K562 (cell line): ENCODE measurements at regions of chr17 and their contacts with region 1.

Region 1: DNA sequence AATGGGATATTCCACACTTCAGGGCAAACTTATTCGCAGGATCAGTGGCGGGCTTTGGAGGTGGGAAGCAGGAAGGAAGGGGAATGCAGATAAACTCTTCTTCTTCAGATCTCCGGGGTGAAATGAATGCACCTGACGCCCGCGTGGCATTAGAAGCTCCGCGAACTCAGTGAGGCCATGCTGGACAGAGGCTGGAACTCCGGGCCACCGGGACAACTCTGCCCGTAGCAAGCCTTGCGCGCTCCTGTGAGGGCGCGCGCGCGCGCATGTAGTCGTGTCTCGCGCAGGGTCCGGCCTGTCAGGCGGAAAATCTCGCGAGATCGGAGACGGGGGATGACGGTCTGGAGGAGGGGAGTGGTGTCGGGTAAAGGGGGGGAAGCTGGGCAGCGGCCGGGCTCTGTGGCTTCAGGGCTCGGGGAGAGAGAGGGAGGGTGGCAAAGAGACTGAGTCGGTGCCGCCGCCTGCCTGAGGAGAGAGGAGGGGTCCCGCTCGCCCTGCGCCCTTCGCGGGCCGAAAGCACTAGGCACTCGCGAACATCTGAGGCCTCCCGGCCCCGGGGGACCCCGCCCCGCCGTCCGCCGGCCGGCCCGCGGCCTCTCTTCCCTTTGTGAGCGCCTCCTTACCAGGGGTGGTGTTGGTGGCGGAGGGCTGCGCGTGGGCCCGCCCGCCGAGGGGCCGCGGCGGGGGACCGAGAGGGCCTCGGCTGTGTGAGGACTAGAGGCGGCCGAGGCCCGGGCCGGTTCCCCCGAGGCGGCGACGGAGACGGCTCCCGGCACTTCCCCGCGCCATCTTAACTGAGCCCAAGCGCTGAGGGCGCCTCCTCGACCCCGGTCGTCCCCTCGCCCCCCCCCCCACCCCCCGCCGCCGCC is at the start of gene TAOK1:
- DNase-seq: peak; percentile 96 to 99 (median 96)
- ATAC-seq: peak; percentile 91
- H3K4me3 ChIP-seq: peak within 1 kb of the TSS; percentile 95
- H3K27ac ChIP-seq: peak within 1 kb of the TSS; percentile 91
- H3K4me1 ChIP-seq: peaks cover 9 to 15% of the 10 kb centered on the region in 2 experiments; a peak in 4 of 5 replicates
- H3K27me3 ChIP-seq: no peaks in the 10 kb centered on the region
- CTCF ChIP-seq: peak in 1 of 3 experiments; percentile 38; a peak in 2 of 6 replicates
- EP300 ChIP-seq: 0 out of 2 replicates have a peak, but pooled peaks have one; percentile 5
- POLR2A ChIP-seq: peak; percentile 95
- RAD21 ChIP-seq: no peak
- polyA plus RNA-seq, gene TAOK1: 3.2 to 3.4 TPM

Region 2: DNA sequence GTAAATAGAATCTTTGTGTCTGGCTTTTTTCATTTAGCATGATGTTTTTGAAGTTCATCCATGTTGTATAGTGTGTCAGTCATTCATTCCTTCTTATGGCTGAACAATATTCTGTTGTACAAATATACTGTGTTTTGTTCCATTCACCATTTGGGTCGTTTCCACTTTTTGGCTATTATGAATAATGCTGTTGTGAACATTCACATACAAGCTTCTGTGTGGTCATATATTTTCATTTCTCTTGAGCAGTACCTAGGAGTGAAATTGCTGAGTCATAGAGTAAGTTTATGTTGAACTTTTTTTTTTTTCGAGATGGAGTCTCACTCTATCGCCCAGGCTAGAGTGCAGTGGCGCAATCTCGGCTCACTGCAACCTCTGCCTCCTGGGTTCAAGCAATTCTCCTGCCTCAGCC is 32.4 kb before region 1 on chr17:
- CTCF ChIA-PET with region 1: no interaction called
- POLR2A ChIA-PET with region 1: no interaction called
- in situ Hi-C with region 1: no loop called
- intact Hi-C with region 1: no loop called
- DNase-seq: peak in 1 of 4 experiments; percentile 14
- ATAC-seq: peak; percentile 79
- H3K4me3 ChIP-seq: no peak overlapping the region
- H3K27ac ChIP-seq: no peak overlapping the region
- H3K4me1 ChIP-seq: peaks cover 0 to 2% of the 10 kb centered on the region in 2 experiments; a peak in 1 of 5 replicates
- H3K27me3 ChIP-seq: no peaks in the 10 kb centered on the region; a peak in 1 of 5 replicates
- CTCF ChIP-seq: no peak
- EP300 ChIP-seq: 0 out of 2 replicates have a peak, but pooled peaks have one; percentile 12
- POLR2A ChIP-seq: no peak
- RAD21 ChIP-seq: no peak

Region 3: DNA sequence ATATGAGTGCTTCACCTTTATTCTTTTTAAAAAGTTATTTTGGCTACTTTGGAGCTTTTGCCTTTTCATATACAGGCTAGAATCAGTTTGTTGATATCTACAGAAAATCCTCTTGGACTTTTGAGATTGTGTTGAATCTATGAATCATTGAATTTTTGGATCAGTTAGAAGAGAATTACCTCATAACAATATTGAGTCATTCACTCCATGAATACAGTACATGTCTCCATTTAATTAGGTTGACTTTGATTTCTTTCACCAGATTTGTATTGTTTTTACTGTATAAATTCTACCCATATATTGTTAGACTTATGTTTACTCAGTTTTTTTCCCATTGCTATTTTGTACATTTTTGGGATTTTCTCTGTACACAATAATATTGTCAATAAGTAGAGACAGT is 54.4 kb after region 1 on chr17:
- CTCF ChIA-PET with region 1: no interaction called
- POLR2A ChIA-PET with region 1: no interaction called
- in situ Hi-C with region 1: no loop called
- intact Hi-C with region 1: no loop called
- DNase-seq: no peak
- ATAC-seq: no peak
- H3K4me3 ChIP-seq: no peak overlapping the region
- H3K27ac ChIP-seq: no peak overlapping the region
- H3K4me1 ChIP-seq: no peaks in the 10 kb centered on the region
- H3K27me3 ChIP-seq: no peaks in the 10 kb centered on the region
- CTCF ChIP-seq: no peak
- EP300 ChIP-seq: no peak
- POLR2A ChIP-seq: no peak
- RAD21 ChIP-seq: no peak

Region 4: DNA sequence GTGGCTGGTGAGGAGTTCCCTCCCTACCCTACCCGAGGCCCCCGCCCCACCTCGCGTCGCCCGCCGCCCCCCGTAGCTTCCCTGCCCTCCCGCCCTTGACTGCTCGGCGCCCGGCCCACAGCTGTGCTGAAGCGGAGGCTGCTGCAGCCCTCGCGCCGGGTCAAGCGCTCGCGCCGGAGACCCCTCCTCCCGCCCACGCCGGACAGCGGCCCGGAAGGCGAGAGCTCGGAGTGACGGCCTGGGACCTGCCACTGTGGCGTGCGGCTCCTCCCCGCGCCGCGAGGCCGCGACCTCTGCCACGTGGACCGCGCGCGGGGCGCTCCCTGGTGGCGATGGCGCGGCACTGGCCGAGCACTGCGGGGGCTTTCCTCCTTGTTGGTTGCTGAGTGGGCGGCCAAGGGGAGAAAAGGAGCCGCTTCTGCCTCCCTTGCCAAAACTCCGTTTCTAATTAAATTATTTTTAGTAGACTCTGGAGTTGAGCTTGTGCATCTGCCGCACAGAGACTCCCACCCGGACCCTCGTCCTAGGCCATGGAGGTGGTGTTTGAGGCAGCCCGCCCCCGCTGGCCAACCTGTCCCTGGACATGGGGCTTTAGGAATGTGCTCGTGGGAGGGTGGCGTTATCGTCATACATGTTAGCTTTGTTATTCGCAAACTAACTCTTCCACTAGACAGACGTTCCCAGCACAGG is 182.6 kb after region 1 on chr17:
- CTCF ChIA-PET with region 1: no interaction called
- POLR2A ChIA-PET with region 1: no interaction called
- in situ Hi-C with region 1: no loop called
- intact Hi-C with region 1: no loop called
- DNase-seq: peak; percentile 64 to 72 (median 70)
- ATAC-seq: peak; percentile 58
- H3K4me3 ChIP-seq: no peak overlapping the region
- H3K27ac ChIP-seq: no peak overlapping the region
- H3K4me1 ChIP-seq: peaks cover 3 to 65% of the 10 kb centered on the region in 2 experiments; a peak in 4 of 5 replicates
- H3K27me3 ChIP-seq: no peaks in the 10 kb centered on the region
- CTCF ChIP-seq: peak; percentile 58 to 73 (median 61)
- EP300 ChIP-seq: no peak
- POLR2A ChIP-seq: no peak
- RAD21 ChIP-seq: peak in 1 of 2 experiments; percentile 61; a peak in 2 of 4 replicates

Region 5: GRCh38 chr17:29589524-29590410 is 199.6 kb after region 1 on chr17 and contains the start of gene GIT1:
- CTCF ChIA-PET with region 1: no interaction called
- POLR2A ChIA-PET with region 1: interaction called, 3 read pairs
- in situ Hi-C with region 1: no loop called
- intact Hi-C with region 1: loop called (anchors 5 kb)
- DNase-seq: peak; percentile 89 to 96 (median 90)
- ATAC-seq: peak; percentile 80
- H3K4me3 ChIP-seq: peak within 1 kb of the TSS; percentile 56
- H3K27ac ChIP-seq: peak within 1 kb of the TSS; percentile 62
- H3K4me1 ChIP-seq: peaks cover 38 to 78% of the 10 kb centered on the region in 2 experiments
- H3K27me3 ChIP-seq: no peaks in the 10 kb centered on the region
- CTCF ChIP-seq: 0 out of 6 replicates have a peak, but pooled peaks of 1 of the 3 experiments have one; percentile 10
- EP300 ChIP-seq: no peak
- POLR2A ChIP-seq: no peak
- RAD21 ChIP-seq: no peak
- polyA plus RNA-seq, gene GIT1: 0.35 to 0.38 TPM

Region 6: GRCh38 chr17:29687596-29687995 is 297.4 kb after region 1 on chr17:
- CTCF ChIA-PET with region 1: no interaction called
- POLR2A ChIA-PET with region 1: no interaction called
- in situ Hi-C with region 1: no loop called
- intact Hi-C with region 1: no loop called
- DNase-seq: no peak
- ATAC-seq: no peak
- H3K4me3 ChIP-seq: no peak overlapping the region
- H3K27ac ChIP-seq: no peak overlapping the region
- H3K4me1 ChIP-seq: peaks cover 0 to 4% of the 10 kb centered on the region in 2 experiments; a peak in 4 of 5 replicates
- H3K27me3 ChIP-seq: no peaks in the 10 kb centered on the region
- CTCF ChIP-seq: no peak
- EP300 ChIP-seq: no peak
- POLR2A ChIP-seq: no peak
- RAD21 ChIP-seq: no peak